ENCODE measurements at regions of chr4 and their contacts with region 1.

Region 1: DNA sequence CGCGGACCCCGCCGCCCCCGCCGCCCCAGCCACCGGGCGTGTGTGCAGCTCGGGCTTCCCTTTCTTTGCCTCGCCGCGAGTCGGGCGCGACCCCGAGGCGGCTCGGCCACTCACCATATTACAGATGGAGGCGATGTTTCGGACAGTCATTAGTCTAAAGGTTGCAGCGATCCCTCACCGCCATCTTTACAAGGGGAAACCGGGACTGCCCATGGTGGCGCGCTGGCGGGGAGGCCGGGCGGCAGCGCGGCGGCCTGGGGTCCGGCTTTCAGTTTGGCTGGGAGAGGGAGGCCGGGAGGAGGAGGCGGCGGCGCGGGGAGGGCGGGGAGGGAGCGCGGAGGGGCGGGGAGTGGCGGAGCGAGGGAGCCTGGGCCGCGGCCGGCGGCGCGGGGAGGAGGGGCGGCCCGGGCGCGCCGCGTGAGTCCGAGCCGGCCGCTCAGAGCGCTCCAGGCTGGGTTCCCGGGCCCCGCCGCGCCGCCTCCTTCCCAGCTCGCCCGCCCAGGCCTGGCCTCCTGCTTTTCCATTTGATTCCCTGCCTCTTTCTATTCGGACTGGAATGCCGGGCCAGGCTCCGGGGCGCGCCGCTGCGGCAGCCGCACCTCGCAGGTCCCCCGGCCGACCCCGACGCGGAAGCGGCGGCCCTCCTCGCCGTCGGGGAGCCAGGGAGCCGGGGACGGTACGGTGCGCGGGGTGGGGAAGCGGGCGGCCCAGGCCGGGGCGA is at the start of gene USP46:
- DNase-seq: peak in 7 of 9 donors; percentile 3 to 65 (median 15)
- ATAC-seq: peak; percentile 86
- H3K4me3 ChIP-seq: peak within 1 kb of the TSS; percentile 52
- H3K4me3 Mint-ChIP-seq: peak within 1 kb of the TSS; percentile 83 to 92 (median 87)
- H3K27ac ChIP-seq: peak within 1 kb of the TSS; percentile 37
- H3K27ac Mint-ChIP-seq: peak within 1 kb of the TSS in 6 of 9 donors; percentile 12 to 77 (median 58)
- H3K4me1 ChIP-seq: peaks cover 5% of the 10 kb centered on the region in 2 donors
- H3K4me1 Mint-ChIP-seq: peaks cover 12 to 23% (median 17%) of the 10 kb centered on the region in 7 donors
- H3K27me3 ChIP-seq: no peaks in the 10 kb centered on the region
- H3K27me3 Mint-ChIP-seq: peaks cover 0 to 24% (median 16%) of the 10 kb centered on the region in 5 donors
- total RNA-seq, gene USP46: 3.0 to 11.7 (median 4.0) TPM

Region 2: DNA sequence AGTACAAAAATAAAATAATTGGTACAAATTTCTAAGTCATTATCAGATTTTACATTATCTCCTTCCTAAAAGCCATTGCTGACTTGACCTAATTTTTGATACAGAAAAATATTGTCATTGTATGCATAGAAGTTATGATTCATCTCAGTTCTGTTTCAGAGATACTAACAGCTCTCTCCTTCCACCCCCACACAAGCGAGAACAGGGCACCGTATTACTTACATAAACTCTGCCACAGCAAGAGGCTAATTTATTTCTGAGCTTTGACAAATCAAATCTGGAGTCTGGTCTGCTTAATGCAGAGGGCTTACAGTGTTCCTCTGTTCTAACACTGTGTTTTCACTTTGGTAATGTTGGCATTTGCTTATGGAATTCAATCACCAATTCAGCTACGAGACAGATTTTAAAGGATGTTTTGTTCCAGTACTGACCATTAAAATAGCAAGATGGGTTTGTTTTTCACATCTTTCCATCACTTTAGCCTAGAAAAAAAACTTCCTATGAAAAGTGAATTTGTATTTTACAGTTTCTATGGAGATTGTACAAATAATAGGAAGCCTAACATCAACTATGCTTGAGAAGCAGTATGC is 181.9 kb before region 1 on chr4:
- CTCF ChIA-PET with region 1: no interaction called
- POLR2A ChIA-PET with region 1: no interaction called
- intact Hi-C with region 1: no loop called
- DNase-seq: no peak
- ATAC-seq: no peak
- H3K4me3 ChIP-seq: no peak overlapping the region
- H3K4me3 Mint-ChIP-seq: no peak overlapping the region
- H3K27ac ChIP-seq: no peak overlapping the region
- H3K27ac Mint-ChIP-seq: no peak overlapping the region
- H3K4me1 ChIP-seq: no peaks in the 10 kb centered on the region
- H3K4me1 Mint-ChIP-seq: no peaks in the 10 kb centered on the region
- H3K27me3 ChIP-seq: peaks cover 0 to 5% of the 10 kb centered on the region in 2 donors
- H3K27me3 Mint-ChIP-seq: peaks cover 0 to 15% (median 6%) of the 10 kb centered on the region in 5 donors

Region 3: DNA sequence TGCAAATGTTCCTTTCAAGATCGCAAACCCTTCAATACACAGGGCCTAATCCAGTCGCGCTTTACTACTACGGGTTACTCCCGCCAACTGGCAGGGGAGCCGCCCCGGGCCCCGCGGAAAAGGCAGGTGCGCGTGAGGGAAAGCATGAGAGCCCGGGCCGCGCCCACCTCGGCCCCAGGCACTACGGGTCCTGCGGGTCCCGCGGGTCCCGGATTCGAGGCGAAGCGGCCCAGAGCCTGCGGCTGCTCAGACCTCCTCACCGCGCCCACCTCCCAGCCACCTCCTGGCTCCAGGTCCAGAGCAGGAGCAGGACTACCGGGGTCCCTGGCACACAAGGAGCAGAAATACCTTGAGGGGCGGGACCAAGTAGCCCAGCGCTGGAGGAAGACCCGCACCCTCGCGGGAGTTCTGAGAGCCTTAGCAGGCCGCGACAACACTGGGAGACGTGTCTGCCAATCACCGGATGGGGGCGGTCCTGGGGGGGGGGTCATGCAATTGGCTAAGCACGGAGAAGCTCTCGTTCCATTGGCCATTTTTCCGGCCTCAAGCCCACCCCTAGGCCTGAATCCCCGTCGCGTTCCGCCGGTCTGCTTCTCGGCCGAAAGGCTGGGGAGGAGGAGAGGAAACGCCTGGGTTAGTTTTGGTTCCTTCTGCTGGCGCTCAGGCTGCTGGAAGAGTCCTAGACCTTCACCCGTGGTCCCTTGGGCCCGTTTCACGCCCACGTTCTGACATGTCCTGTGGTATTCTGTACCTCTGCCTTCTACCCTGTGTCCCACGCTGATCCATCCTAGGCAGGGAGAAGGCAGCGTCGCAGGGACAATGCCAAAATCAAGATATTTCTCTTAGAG is 63.0 kb after region 1 on chr4:
- CTCF ChIA-PET with region 1: no interaction called
- POLR2A ChIA-PET with region 1: interaction called, 4 read pairs
- intact Hi-C with region 1: loop called in 1 of 2 experiments (anchors 1 kb)
- DNase-seq: peak; percentile 62 to 87 (median 81)
- ATAC-seq: peak; percentile 99
- H3K4me3 ChIP-seq: peak overlapping the region; percentile 83
- H3K4me3 Mint-ChIP-seq: peak overlapping the region; percentile 55 to 90 (median 79)
- H3K27ac ChIP-seq: peak overlapping the region; percentile 86
- H3K27ac Mint-ChIP-seq: peak overlapping the region; percentile 54 to 95 (median 86)
- H3K4me1 ChIP-seq: no peaks in the 10 kb centered on the region
- H3K4me1 Mint-ChIP-seq: peaks cover 5 to 14% (median 11%) of the 10 kb centered on the region in 7 donors
- H3K27me3 ChIP-seq: no peaks in the 10 kb centered on the region
- H3K27me3 Mint-ChIP-seq: peaks cover 0 to 11% (median 0%) of the 10 kb centered on the region in 5 donors

Measured in naive thymus-derived CD4-positive, alpha-beta T cell (primary cell).